ENCODE measurements at regions of chr2 and their contacts with region 1.

Region 1: GRCh38 chr2:210252699-210253606 is 27.7 kb upstream of the ACADL start:
- DNase-seq: no peak
- ATAC-seq: no peak
- H3K4me3 ChIP-seq: peak overlapping the region; percentile 24
- H3K27ac ChIP-seq: no peak overlapping the region
- H3K4me1 ChIP-seq: peaks cover 5% of the 10 kb centered on the region
- H3K27me3 ChIP-seq: no peaks in the 10 kb centered on the region
- CTCF ChIP-seq: no peak

Region 2: GRCh38 chr2:210287301-210287700 is 34.3 kb after region 1 on chr2:
- intact Hi-C with region 1: no loop called
- DNase-seq: no peak
- ATAC-seq: peak; percentile 4 to 40 (median 30)
- H3K4me3 ChIP-seq: no peak overlapping the region
- H3K27ac ChIP-seq: peak overlapping the region; percentile 77
- H3K4me1 ChIP-seq: peaks cover 22% of the 10 kb centered on the region
- H3K27me3 ChIP-seq: no peaks in the 10 kb centered on the region
- CTCF ChIP-seq: no peak

Region 3: GRCh38 chr2:210399440-210400041 is 146.6 kb after region 1 on chr2:
- intact Hi-C with region 1: loop called (anchors 1 to 2 kb)
- DNase-seq: no peak
- ATAC-seq: peak; percentile 53 to 82 (median 68)
- H3K4me3 ChIP-seq: no peak overlapping the region
- H3K27ac ChIP-seq: no peak overlapping the region
- H3K4me1 ChIP-seq: peaks cover 14% of the 10 kb centered on the region
- H3K27me3 ChIP-seq: no peaks in the 10 kb centered on the region
- CTCF ChIP-seq: peak; percentile 69